ENCODE measurements at regions of chr1 and their contacts with region 1.

Region 1: DNA sequence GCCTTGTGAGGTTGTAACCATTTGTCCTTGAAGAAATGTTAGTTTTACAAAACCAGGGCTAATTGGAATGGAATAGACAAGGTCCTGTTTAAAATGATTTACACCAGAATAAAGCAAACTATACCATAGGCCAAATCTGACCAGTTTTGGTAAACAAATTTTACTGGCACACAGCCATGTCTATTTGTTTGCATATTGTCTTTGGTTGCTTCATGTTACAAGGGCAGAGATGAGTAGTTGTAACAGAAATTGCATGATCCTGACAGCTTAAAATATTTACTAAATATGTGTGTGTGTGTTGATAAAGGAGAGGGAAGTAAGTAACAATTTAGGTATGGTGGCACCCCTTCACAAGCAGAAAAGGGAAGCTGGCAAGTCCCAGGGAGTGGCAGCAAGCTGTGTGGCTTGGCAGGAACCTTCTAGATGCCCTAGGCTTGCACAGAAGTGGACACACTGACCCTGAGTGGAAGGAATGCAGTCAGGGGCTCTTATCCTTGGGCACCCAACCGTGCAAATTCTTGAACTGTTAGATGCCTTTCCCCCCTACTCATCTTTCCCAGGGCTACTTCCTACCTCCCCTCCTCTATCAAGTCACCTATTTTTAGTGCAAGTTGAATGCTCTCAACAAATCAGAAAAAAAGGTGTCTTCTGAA is 19.0 kb downstream of the ACP6 start:
- DNase-seq: no peak
- ATAC-seq: no peak
- H3K4me3 ChIP-seq: no peak overlapping the region
- H3K27ac ChIP-seq: no peak overlapping the region
- H3K4me1 ChIP-seq: no peaks in the 10 kb centered on the region
- H3K27me3 ChIP-seq: no peaks in the 10 kb centered on the region
- CTCF ChIP-seq: no peak
- EP300 ChIP-seq: no peak
- POLR2A ChIP-seq: no peak
- RAD21 ChIP-seq: no peak

Region 2: DNA sequence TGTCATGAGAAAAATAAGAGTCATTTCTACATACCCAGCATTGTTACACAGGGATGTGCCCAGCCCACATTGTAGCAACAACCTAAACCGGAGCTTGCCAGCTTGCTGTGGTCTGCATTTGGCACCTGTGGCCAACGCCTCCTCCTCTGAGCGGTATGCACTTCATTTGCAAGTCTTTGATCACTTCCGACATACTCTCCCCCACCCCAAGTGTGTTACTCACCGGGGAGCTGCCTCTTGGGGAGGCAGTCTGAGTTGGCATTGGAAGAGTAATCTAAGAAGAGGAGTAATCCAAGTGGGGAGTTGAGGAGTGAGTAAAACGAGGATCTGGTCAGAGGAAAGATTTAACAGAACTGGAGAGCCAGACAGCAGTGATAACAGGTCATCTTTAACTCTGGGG is 106.2 kb before region 1 on chr1:
- CTCF ChIA-PET with region 1: no interaction called
- POLR2A ChIA-PET with region 1: no interaction called
- RAD21 ChIA-PET with region 1: no interaction called
- SMC1A ChIA-PET with region 1: no interaction called
- in situ Hi-C with region 1: no loop called
- intact Hi-C with region 1: no loop called
- DNase-seq: peak; percentile 24
- ATAC-seq: peak; percentile 73
- H3K4me3 ChIP-seq: no peak overlapping the region
- H3K27ac ChIP-seq: no peak overlapping the region
- H3K4me1 ChIP-seq: no peaks in the 10 kb centered on the region
- H3K27me3 ChIP-seq: no peaks in the 10 kb centered on the region
- CTCF ChIP-seq: no peak
- EP300 ChIP-seq: no peak
- POLR2A ChIP-seq: no peak
- RAD21 ChIP-seq: no peak

Region 3: GRCh38 chr1:147618077-147618569 is 33.2 kb before region 1 on chr1:
- CTCF ChIA-PET with region 1: no interaction called
- POLR2A ChIA-PET with region 1: no interaction called
- RAD21 ChIA-PET with region 1: no interaction called
- SMC1A ChIA-PET with region 1: no interaction called
- in situ Hi-C with region 1: loop called (anchors 5 kb)
- intact Hi-C with region 1: no loop called
- DNase-seq: no peak
- ATAC-seq: no peak
- H3K4me3 ChIP-seq: no peak overlapping the region
- H3K27ac ChIP-seq: no peak overlapping the region
- H3K4me1 ChIP-seq: no peaks in the 10 kb centered on the region
- H3K27me3 ChIP-seq: no peaks in the 10 kb centered on the region
- CTCF ChIP-seq: no peak
- EP300 ChIP-seq: no peak
- POLR2A ChIP-seq: no peak
- RAD21 ChIP-seq: no peak

Region 4: GRCh38 chr1:147669575-147670316 is 18.4 kb after region 1 on chr1:
- CTCF ChIA-PET with region 1: no interaction called
- POLR2A ChIA-PET with region 1: no interaction called
- RAD21 ChIA-PET with region 1: no interaction called
- SMC1A ChIA-PET with region 1: no interaction called
- in situ Hi-C with region 1: no loop called
- intact Hi-C with region 1: loop called (anchors 2 kb)
- DNase-seq: no peak
- ATAC-seq: peak; percentile 72
- H3K4me3 ChIP-seq: peak overlapping the region; percentile 93
- H3K27ac ChIP-seq: peak overlapping the region; percentile 37; the same call in 1 of the 2 replicates
- H3K4me1 ChIP-seq: no peaks in the 10 kb centered on the region
- H3K27me3 ChIP-seq: no peaks in the 10 kb centered on the region
- CTCF ChIP-seq: no peak
- EP300 ChIP-seq: no peak
- POLR2A ChIP-seq: peak; percentile 44; the same call in 1 of the 2 replicates
- RAD21 ChIP-seq: no peak